ENCODE measurements at regions of chr7 and their contacts with region 1.

Region 1: DNA sequence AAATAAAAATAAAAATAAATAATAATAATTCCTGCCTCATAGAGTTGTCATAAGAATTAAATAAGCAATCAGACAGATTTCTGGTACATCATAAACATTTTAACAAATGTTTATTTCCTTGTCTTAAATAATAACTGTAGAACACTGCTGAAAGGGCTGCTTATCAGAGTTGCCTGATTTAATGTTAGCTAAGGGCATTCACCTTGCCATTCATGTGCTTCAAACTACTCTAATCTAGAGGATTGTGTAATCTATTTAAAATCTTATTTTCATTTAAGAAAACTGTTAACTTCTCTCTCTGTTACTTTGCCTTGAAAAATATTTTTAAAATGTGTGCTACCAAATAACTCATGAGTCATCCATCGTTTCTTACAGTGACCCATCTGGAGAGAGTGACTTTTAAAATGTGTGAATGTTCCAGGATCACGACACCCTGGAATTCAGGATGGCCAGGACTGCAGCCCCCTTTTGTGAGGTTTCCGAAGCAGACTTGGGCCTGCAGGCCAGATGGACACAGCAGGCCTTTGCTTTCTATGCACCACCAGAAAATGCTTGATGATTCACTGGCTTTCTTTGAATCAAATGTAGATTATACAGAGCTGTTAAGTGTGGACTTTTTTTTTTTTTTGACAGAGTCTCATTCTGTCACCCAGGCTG is 109.1 kb upstream of the TNS3 start:
- DNase-seq: peak; percentile 23 to 65
- H3K4me3 ChIP-seq: no peak overlapping the region
- H3K27ac ChIP-seq: peak overlapping the region; percentile 78
- H3K4me1 ChIP-seq: peaks cover 51% of the 10 kb centered on the region
- H3K27me3 ChIP-seq: no peaks in the 10 kb centered on the region
- CTCF ChIP-seq: no peak

Region 2: DNA sequence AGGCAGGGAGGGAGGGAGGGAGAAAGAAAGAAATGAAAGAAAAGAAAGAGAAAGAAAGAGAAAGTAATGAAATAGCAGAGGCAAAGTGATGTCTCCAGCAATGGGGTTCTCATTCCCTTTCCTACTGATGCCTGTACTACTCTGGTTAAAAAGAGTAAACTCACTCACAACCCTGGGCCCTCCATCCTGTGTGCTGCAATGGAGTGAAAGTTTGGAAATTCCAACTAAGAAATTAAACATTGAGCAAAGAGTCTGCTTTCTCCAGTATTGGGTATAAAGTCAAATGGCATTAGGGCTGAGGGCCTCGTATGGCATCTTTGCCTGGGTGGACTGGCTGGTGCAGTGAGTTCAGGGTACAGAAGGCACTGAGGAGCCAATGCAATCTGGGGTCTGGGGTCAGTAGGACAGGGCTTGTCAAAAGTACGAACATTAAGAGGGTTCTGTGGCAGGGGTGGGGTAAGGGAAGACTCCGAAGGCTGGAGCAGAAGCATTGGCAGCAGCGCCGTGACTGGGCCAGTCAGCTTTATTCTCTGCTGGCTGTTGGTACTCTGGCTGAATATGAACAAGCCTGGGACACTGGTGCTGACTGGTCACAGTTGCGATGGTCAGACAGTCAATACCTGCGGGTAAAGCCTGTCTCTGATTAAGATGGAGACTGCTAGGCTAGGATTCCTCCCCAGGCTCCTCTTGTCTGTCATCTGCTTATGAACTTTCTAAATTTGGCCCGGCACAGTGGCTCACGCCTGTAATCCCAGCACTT is 85.0 kb before region 1 on chr7:
- CTCF ChIA-PET with region 1: no interaction called
- POLR2A ChIA-PET with region 1: interaction called, 13 read pairs
- intact Hi-C with region 1: loop called (anchors 1 kb)
- DNase-seq: no peak
- H3K4me3 ChIP-seq: no peak overlapping the region
- H3K27ac ChIP-seq: peak overlapping the region; percentile 98
- H3K4me1 ChIP-seq: peaks cover 77% of the 10 kb centered on the region
- H3K27me3 ChIP-seq: no peaks in the 10 kb centered on the region
- CTCF ChIP-seq: no peak

Region 3: DNA sequence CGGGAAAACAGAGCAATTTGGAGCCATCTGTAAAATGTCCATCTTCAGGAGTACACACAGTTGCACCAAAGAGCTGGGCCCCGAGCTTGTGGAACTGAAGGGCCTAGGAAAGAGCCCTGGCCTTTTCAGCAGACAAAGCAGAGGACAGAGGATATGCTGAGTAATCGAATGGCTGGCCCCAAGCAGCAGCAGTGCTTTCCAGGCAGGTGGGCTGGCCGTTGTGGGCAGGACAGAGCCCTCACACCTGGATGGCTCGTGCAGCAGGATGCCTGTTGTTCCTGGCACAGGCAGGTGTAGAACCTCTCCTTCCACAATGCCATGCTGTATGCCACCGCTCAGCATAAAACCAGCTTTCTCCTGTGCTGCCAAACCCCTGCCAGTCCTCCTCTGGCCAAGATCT is 76.6 kb before region 1 on chr7:
- CTCF ChIA-PET with region 1: no interaction called
- POLR2A ChIA-PET with region 1: interaction called, 12 read pairs
- intact Hi-C with region 1: no loop called
- DNase-seq: no peak
- H3K4me3 ChIP-seq: no peak overlapping the region
- H3K27ac ChIP-seq: no peak overlapping the region
- H3K4me1 ChIP-seq: peaks cover 12% of the 10 kb centered on the region
- H3K27me3 ChIP-seq: no peaks in the 10 kb centered on the region
- CTCF ChIP-seq: no peak

Region 4: GRCh38 chr7:47724335-47724982 is 33.4 kb after region 1 on chr7:
- CTCF ChIA-PET with region 1: no interaction called
- POLR2A ChIA-PET with region 1: no interaction called
- intact Hi-C with region 1: loop called (anchors 1 kb)
- DNase-seq: peak; percentile 67 to 90
- H3K4me3 ChIP-seq: peak overlapping the region; percentile 16; the same call in 1 of the 2 replicates
- H3K27ac ChIP-seq: peak overlapping the region; percentile 94
- H3K4me1 ChIP-seq: peaks cover 30% of the 10 kb centered on the region
- H3K27me3 ChIP-seq: no peaks in the 10 kb centered on the region
- CTCF ChIP-seq: no peak